Activated CD4-positive, alpha-beta T cell treated with anti-CD3 and anti-CD28 coated beads for 36 hours (primary cell): ENCODE measurements at regions of chr15 and their contacts with region 1.

Region 1: GRCh38 chr15:48536681-48537091 is 108.8 kb downstream of the FBN1 start:
- DNase-seq: no peak
- ATAC-seq: no peak
- H3K4me3 Mint-ChIP-seq: no peak overlapping the region
- H3K27ac Mint-ChIP-seq: no peak overlapping the region
- H3K4me1 Mint-ChIP-seq: no peaks in the 10 kb centered on the region
- H3K27me3 Mint-ChIP-seq: peaks cover 4% of the 10 kb centered on the region

Region 2: GRCh38 chr15:48592221-48592731 is 55.6 kb after region 1 on chr15:
- CTCF ChIA-PET with region 1: no interaction called
- POLR2A ChIA-PET with region 1: no interaction called
- intact Hi-C with region 1: loop called in 1 of 2 experiments (anchors 10 kb)
- DNase-seq: no peak
- ATAC-seq: no peak
- H3K4me3 Mint-ChIP-seq: no peak overlapping the region
- H3K27ac Mint-ChIP-seq: no peak overlapping the region
- H3K4me1 Mint-ChIP-seq: no peaks in the 10 kb centered on the region
- H3K27me3 Mint-ChIP-seq: no peaks in the 10 kb centered on the region